AG04449 (cell line): ENCODE measurements at regions of chr7 and their contacts with region 1.

Region 1: DNA sequence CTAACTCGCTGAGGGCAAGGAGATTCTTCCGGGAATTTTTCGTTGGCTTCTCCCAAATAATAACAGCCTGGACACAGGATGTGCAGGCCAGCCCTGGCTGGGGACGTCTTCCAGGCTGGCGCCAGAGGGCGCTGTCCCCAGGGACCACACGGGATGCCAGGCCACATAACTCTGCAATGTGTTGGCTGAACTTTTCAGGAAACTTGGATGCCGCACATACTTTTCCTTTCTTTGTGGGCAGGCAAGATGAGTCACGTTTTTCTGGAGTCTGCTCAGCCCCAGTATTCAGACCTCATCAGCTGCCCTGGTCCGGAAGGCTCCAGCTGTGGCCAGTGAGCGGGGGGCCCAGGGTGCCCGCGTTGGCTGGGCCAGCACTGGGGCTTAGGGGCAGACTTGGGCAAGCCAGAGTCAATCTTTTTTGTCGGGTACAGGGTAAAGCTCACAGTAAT is 122.7 kb downstream of the PRKAG2 start:
- DNase-seq: peak; percentile 97
- H3K4me3 ChIP-seq: no peak overlapping the region
- CTCF ChIP-seq: peak; percentile 98

Region 2: GRCh38 chr7:151484971-151485707 is 269.0 kb before region 1 on chr7:
- CTCF ChIA-PET with region 1: interaction called, 20 read pairs
- POLR2A ChIA-PET with region 1: no interaction called
- DNase-seq: no peak
- H3K4me3 ChIP-seq: no peak overlapping the region
- CTCF ChIP-seq: no peak

Region 3: DNA sequence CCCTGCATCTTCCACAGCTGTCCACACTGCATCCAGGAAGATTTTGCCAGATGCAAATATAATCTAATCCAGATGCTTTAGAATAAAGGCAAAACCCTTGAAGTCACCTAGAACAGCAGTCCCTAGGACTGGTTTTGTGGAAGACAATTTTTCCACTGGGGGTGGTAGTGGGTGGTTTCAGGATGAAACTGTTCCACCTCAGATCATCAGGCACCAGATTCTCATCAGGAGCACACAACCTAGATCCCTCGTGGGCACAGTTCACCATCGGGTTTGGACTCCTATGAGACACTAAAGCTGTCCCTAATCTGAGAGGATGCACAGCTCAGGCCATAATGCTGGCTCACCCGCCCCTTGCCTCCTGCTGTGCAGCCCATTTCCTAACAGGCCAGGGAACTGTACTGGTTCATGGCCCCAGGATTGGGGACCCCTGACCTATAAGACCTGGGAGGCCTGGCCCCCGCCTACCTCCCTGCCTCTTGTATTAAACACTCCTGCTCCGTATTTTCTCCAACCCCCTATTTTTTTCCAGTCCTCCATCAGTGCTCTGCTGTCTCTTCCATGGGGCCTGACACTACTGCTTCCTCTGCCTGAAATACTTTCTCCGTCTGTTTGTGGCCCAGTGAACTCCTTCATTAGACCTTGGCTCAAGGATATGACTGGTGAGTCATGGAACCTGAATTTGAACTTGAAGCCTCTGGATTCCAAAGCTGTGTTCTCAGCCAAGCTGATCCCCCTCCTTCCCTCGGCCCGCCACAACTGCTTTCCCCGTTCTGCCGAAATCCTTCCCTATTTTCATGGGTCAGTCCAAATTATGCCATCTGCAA is 154.6 kb before region 1 on chr7:
- CTCF ChIA-PET with region 1: interaction called, 10 read pairs
- POLR2A ChIA-PET with region 1: interaction called, 4 read pairs
- DNase-seq: peak; percentile 80
- H3K4me3 ChIP-seq: peak overlapping the region; percentile 7; the same call in 1 of the 2 replicates
- CTCF ChIP-seq: no peak

Region 4: GRCh38 chr7:151736403-151736909 is 17.7 kb before region 1 on chr7:
- CTCF ChIA-PET with region 1: interaction called, 113 read pairs
- POLR2A ChIA-PET with region 1: no interaction called
- DNase-seq: peak; percentile 87
- H3K4me3 ChIP-seq: peak overlapping the region; percentile 55
- CTCF ChIP-seq: peak; percentile 54

Region 5: GRCh38 chr7:152006336-152006735 is 252.2 kb after region 1 on chr7:
- CTCF ChIA-PET with region 1: no interaction called
- POLR2A ChIA-PET with region 1: no interaction called
- DNase-seq: no peak
- H3K4me3 ChIP-seq: no peak overlapping the region
- CTCF ChIP-seq: no peak